Activated T-helper 1 cell treated with anti-CD3 and anti-CD28 coated beads, Interleukin-12 subunit alpha, Interleukin-12 subunit beta, Interleukin-2, Interleukin-4 antibody, amounts not matched to agents 30 ng/mL and 10 ng/mL and 1 ng/mL, durations not matched to agents 14 hours and 24 hours and 36 hours (primary cell): ENCODE measurements at regions of chr3 and their contacts with region 1.

Region 1: GRCh38 chr3:16600780-16601539 is 4.3 kb downstream of the DAZL start:
- DNase-seq: peak; percentile 44
- H3K4me3 Mint-ChIP-seq: no peak overlapping the region
- H3K27ac Mint-ChIP-seq: no peak overlapping the region
- H3K4me1 Mint-ChIP-seq: peaks cover 29% of the 10 kb centered on the region
- H3K27me3 Mint-ChIP-seq: peaks cover 24% of the 10 kb centered on the region

Region 2: GRCh38 chr3:16264708-16265454 is 336.1 kb before region 1 on chr3 and contains the starts of genes DPH3 and OXNAD1:
- intact Hi-C with region 1: loop called (anchors 1 kb)
- DNase-seq: peak; percentile 99
- H3K4me3 Mint-ChIP-seq: peak within 1 kb of the TSS; percentile 97
- H3K27ac Mint-ChIP-seq: peak within 1 kb of the TSS; percentile 100
- H3K4me1 Mint-ChIP-seq: peaks cover 35% of the 10 kb centered on the region
- H3K27me3 Mint-ChIP-seq: no peaks in the 10 kb centered on the region
- total RNA-seq, gene DPH3: 28.1 and 36.6 TPM in 2 replicates
- total RNA-seq, gene OXNAD1: 29.5 and 31.1 TPM in 2 replicates

Region 3: GRCh38 chr3:16516695-16517481 is 84.1 kb before region 1 on chr3:
- intact Hi-C with region 1: loop called (anchors 2 kb)
- DNase-seq: no peak
- H3K4me3 Mint-ChIP-seq: peak overlapping the region; percentile 97
- H3K27ac Mint-ChIP-seq: peak overlapping the region; percentile 77
- H3K4me1 Mint-ChIP-seq: peaks cover 73% of the 10 kb centered on the region
- H3K27me3 Mint-ChIP-seq: no peaks in the 10 kb centered on the region

Region 4: DNA sequence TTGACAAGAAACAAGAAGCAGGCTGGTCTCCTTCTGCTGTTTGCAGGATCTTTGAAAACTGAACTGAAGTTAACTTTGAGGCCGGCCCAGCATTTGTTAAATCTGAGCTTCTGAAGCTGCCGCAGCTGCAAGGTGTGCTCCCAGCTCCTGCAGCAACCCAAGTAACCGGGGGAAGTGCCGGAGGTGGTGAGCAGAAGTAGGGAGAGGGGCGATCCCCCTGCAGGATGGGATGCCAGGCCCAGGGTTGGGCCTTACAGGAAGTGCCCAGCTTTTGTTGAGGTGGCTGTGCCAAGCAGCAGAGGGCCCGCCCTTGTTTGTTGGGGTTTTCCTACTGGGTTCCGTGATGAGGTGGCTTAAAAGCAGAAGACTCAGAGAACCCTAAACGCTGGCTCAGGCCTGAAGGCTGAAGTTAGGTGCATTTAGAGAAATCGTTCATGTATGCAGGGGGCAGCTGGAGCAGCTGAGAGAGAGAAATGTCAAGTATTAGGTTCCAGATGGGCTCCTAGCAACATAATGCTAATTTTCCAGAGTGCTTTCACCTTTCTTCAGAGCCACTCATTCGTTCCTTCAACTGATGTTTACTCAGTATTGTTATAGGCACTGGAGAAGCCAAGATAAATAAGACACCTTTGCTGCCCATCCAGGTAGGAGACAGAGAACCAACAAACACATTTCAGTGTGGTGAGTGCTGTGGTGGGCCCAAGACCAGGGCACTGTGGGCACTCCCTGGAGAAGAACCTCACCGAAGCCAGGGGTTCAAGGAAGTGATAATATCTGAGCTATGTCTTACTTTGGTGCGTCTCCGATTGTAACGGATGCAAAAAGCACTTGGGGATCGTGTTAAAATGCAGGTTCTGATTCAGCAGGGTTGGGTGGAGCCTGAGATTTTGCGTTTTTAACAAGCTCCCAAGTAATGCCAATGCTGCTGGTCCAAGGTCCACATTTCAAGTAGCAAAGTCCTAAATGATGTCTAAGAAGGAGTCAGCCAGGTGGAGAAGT is 241.6 kb after region 1 on chr3:
- intact Hi-C with region 1: loop called (anchors 2 kb)
- DNase-seq: peak; percentile 73
- H3K4me3 Mint-ChIP-seq: peak overlapping the region; percentile 77
- H3K27ac Mint-ChIP-seq: peak overlapping the region; percentile 99
- H3K4me1 Mint-ChIP-seq: peaks cover 71% of the 10 kb centered on the region
- H3K27me3 Mint-ChIP-seq: peaks cover 3% of the 10 kb centered on the region

Region 5: GRCh38 chr3:17088602-17089313 is 487.8 kb after region 1 on chr3:
- intact Hi-C with region 1: loop called (anchors 5 kb)
- DNase-seq: no peak
- H3K4me3 Mint-ChIP-seq: peak overlapping the region; percentile 27
- H3K27ac Mint-ChIP-seq: peak overlapping the region; percentile 25
- H3K4me1 Mint-ChIP-seq: peaks cover 39% of the 10 kb centered on the region
- H3K27me3 Mint-ChIP-seq: no peaks in the 10 kb centered on the region

Region 6: GRCh38 chr3:17258823-17259436 is 658.0 kb after region 1 on chr3:
- intact Hi-C with region 1: loop called (anchors 1 kb)
- DNase-seq: no peak
- H3K4me3 Mint-ChIP-seq: no peak overlapping the region
- H3K27ac Mint-ChIP-seq: no peak overlapping the region
- H3K4me1 Mint-ChIP-seq: no peaks in the 10 kb centered on the region
- H3K27me3 Mint-ChIP-seq: peaks cover 3% of the 10 kb centered on the region